ENCODE measurements at regions of chr6 and their contacts with region 1.

Region 1: DNA sequence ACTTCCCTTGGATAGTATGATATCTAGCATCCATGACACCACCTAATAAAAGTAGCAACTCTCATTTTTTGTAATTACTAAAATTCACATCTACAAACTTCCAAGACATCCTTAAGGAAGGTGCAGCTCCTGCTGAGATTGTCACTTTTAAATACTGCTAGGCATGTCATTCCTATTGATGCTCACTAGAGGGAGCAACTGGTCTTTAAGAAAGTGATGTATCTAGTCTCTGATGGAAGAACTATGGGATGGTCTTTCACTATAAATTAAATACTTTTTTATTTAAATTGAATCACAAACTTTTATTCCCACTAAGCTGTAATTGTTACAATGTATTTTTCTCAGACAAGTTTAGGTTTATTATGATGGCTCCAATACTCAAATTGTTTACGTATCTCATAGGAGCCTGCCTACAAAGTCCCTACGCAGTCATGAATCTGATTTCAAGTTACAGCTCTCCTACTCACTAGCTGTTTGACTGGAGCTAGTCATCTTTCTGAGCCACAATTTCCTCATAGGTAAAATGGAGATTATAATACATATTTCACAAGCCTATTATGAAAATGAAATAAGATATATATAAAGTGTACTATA is 8.1 kb upstream of the TSPYL1 start:
- DNase-seq: no peak
- ATAC-seq: peak; percentile 80
- H3K4me3 Mint-ChIP-seq: no peak overlapping the region
- H3K27ac Mint-ChIP-seq: no peak overlapping the region
- H3K4me1 Mint-ChIP-seq: no peaks in the 10 kb centered on the region
- H3K27me3 Mint-ChIP-seq: no peaks in the 10 kb centered on the region
- CTCF ChIP-seq: peak; percentile 95

Region 2: GRCh38 chr6:116268589-116269293 is 19.0 kb before region 1 on chr6:
- CTCF ChIA-PET with region 1: interaction called, 14 read pairs
- POLR2A ChIA-PET with region 1: no interaction called
- intact Hi-C with region 1: no loop called
- DNase-seq: no peak
- ATAC-seq: peak; percentile 68
- H3K4me3 Mint-ChIP-seq: no peak overlapping the region
- H3K27ac Mint-ChIP-seq: peak overlapping the region; percentile 43
- H3K4me1 Mint-ChIP-seq: peaks cover 33% of the 10 kb centered on the region
- H3K27me3 Mint-ChIP-seq: no peaks in the 10 kb centered on the region
- CTCF ChIP-seq: peak; percentile 66

Region 3: DNA sequence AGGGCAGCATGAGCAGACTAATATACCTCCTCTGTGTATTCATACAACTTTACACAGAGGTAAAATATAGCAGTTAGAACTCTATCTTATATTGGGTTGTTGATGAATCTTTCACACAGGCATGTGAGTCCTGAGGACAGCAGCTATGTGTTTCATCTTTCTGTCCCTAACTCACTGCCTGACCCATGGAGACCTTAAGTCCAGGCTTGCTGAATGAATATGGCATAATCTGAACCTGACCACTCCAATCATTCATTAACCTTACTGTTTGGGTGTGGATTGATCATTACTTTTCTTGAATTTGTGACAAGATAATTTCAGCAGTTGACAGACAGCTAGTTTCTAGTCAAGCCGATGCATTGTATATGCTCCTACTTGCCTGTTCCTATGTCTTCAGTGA is 19.2 kb after region 1 on chr6:
- CTCF ChIA-PET with region 1: interaction called, 11 read pairs
- POLR2A ChIA-PET with region 1: no interaction called
- intact Hi-C with region 1: no loop called
- DNase-seq: no peak
- ATAC-seq: no peak
- H3K4me3 Mint-ChIP-seq: no peak overlapping the region
- H3K27ac Mint-ChIP-seq: no peak overlapping the region
- H3K4me1 Mint-ChIP-seq: peaks cover 2% of the 10 kb centered on the region
- H3K27me3 Mint-ChIP-seq: no peaks in the 10 kb centered on the region
- CTCF ChIP-seq: no peak

Region 4: GRCh38 chr6:116381010-116381409 is 93.2 kb after region 1 on chr6:
- CTCF ChIA-PET with region 1: no interaction called
- POLR2A ChIA-PET with region 1: no interaction called
- intact Hi-C with region 1: no loop called
- DNase-seq: no peak
- ATAC-seq: no peak
- H3K4me3 Mint-ChIP-seq: no peak overlapping the region
- H3K27ac Mint-ChIP-seq: no peak overlapping the region
- H3K4me1 Mint-ChIP-seq: no peaks in the 10 kb centered on the region
- H3K27me3 Mint-ChIP-seq: peaks cover 8% of the 10 kb centered on the region
- CTCF ChIP-seq: no peak

Region 5: DNA sequence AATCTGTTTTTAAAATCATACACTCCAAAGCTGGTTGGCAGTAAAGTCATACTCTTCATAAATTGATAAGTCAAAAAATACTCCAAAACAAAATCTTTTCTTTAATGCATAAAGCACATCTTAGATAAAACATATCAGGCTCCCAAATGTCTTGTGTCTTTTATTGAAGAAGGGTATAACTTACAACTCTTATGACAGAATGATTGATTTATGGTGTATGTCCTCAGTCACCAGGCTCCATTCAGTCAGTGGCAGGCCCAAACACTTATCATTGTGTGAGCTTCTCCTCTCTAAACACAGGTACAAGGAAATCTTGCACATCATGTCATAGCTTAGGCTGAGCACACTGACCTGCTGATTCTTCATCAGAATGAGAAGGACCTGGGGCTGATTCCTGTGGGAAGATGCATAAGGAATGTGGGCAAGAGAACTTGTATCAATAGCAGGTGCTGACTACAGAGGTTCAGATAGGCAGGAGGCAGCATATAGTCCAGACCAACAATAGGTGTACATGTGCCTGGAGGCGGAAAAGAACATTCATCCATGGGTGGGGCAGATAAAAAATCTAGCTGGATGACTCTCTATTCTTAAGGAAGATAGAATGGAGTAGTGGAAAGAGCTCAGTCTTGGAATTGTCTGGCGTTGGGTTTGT is 225.6 kb after region 1 on chr6:
- CTCF ChIA-PET with region 1: interaction called, 12 read pairs
- POLR2A ChIA-PET with region 1: no interaction called
- intact Hi-C with region 1: no loop called
- DNase-seq: no peak
- ATAC-seq: no peak
- H3K4me3 Mint-ChIP-seq: no peak overlapping the region
- H3K27ac Mint-ChIP-seq: no peak overlapping the region
- H3K4me1 Mint-ChIP-seq: no peaks in the 10 kb centered on the region
- H3K27me3 Mint-ChIP-seq: peaks cover 2% of the 10 kb centered on the region
- CTCF ChIP-seq: no peak

Region 6: GRCh38 chr6:116531675-116532570 is 244.1 kb after region 1 on chr6:
- CTCF ChIA-PET with region 1: interaction called, 69 read pairs
- POLR2A ChIA-PET with region 1: no interaction called
- intact Hi-C with region 1: loop called (anchors 1 kb)
- DNase-seq: peak; percentile 81
- ATAC-seq: peak; percentile 91
- H3K4me3 Mint-ChIP-seq: no peak overlapping the region
- H3K27ac Mint-ChIP-seq: no peak overlapping the region
- H3K4me1 Mint-ChIP-seq: no peaks in the 10 kb centered on the region
- H3K27me3 Mint-ChIP-seq: peaks cover 10% of the 10 kb centered on the region
- CTCF ChIP-seq: peak; percentile 93

Region 7: GRCh38 chr6:116542426-116542825 is 254.6 kb after region 1 on chr6:
- CTCF ChIA-PET with region 1: interaction called, 29 read pairs
- POLR2A ChIA-PET with region 1: no interaction called
- intact Hi-C with region 1: no loop called
- DNase-seq: no peak
- ATAC-seq: no peak
- H3K4me3 Mint-ChIP-seq: no peak overlapping the region
- H3K27ac Mint-ChIP-seq: no peak overlapping the region
- H3K4me1 Mint-ChIP-seq: no peaks in the 10 kb centered on the region
- H3K27me3 Mint-ChIP-seq: peaks cover 13% of the 10 kb centered on the region
- CTCF ChIP-seq: no peak

Region 8: GRCh38 chr6:116561377-116562018 is 273.7 kb after region 1 on chr6:
- CTCF ChIA-PET with region 1: interaction called, 28 read pairs
- POLR2A ChIA-PET with region 1: no interaction called
- intact Hi-C with region 1: loop called (anchors 10 kb)
- DNase-seq: peak; percentile 84
- ATAC-seq: peak; percentile 83
- H3K4me3 Mint-ChIP-seq: no peak overlapping the region
- H3K27ac Mint-ChIP-seq: no peak overlapping the region
- H3K4me1 Mint-ChIP-seq: no peaks in the 10 kb centered on the region
- H3K27me3 Mint-ChIP-seq: peaks cover 2% of the 10 kb centered on the region
- CTCF ChIP-seq: peak; percentile 82